PC-3 (cell line): ENCODE measurements at regions of chr11 and their contacts with region 1.

Region 1: DNA sequence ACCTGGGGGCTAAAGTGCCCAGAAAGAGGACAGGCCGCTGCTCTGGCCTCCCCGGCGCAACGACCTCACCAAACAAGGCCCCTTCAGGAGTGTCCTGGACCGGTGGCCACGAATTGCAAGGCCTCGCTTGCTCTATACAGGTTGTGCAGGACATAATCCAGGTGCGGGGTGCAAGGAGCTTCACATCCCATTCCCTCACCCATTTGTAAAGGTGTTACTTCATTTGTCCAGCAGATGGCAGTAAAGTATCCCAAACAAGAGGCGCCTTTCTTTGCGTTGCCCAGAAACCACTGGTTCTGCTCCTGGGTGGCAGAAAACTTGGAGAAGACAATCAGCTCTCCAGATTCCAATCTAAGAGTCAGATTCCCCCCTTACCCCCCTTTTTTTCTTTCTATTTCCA is 35.9 kb upstream of the PRDM11 start:
- DNase-seq: peak; percentile 82
- ATAC-seq: peak; percentile 72
- H3K4me3 ChIP-seq: no peak overlapping the region
- H3K27ac ChIP-seq: no peak overlapping the region
- H3K4me1 ChIP-seq: no peaks in the 10 kb centered on the region
- H3K27me3 ChIP-seq: peaks cover 5% of the 10 kb centered on the region; the same call in 1 of the 2 replicates
- CTCF ChIP-seq: peak; percentile 74

Region 2: GRCh38 chr11:44208976-44209603 is 901.5 kb before region 1 on chr11:
- CTCF ChIA-PET with region 1: interaction called, 22 read pairs
- POLR2A ChIA-PET with region 1: no interaction called
- intact Hi-C with region 1: no loop called
- DNase-seq: no peak
- ATAC-seq: no peak
- H3K4me3 ChIP-seq: no peak overlapping the region
- H3K27ac ChIP-seq: no peak overlapping the region
- H3K4me1 ChIP-seq: no peaks in the 10 kb centered on the region
- H3K27me3 ChIP-seq: no peaks in the 10 kb centered on the region
- CTCF ChIP-seq: no peak

Region 3: GRCh38 chr11:45252134-45252855 is 141.7 kb after region 1 on chr11:
- CTCF ChIA-PET with region 1: interaction called, 6 read pairs
- POLR2A ChIA-PET with region 1: no interaction called
- intact Hi-C with region 1: loop called (anchors 5 kb)
- DNase-seq: peak; percentile 60
- ATAC-seq: peak; percentile 97
- H3K4me3 ChIP-seq: no peak overlapping the region
- H3K27ac ChIP-seq: no peak overlapping the region
- H3K4me1 ChIP-seq: no peaks in the 10 kb centered on the region
- H3K27me3 ChIP-seq: no peaks in the 10 kb centered on the region
- CTCF ChIP-seq: peak; percentile 85

Region 4: DNA sequence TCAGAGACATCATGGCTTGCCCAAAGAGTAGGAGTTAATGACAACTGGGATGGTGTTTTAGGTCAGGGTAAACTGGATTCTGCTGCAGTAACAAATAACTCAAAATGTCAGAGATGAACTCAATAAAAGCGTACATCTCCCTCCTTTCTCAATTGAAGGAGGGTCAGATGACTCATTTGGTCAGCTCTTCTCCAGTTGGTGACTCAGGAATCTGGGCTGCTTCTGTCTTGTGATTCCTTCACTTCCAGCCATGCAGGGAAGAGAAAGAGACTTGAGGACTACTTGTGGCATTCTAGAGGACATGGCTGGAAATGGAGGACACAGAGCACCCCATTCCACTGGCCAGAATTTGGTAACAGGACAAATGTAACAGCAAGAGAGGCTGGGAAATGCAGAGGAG is 178.8 kb after region 1 on chr11:
- CTCF ChIA-PET with region 1: interaction called, 3 read pairs
- POLR2A ChIA-PET with region 1: no interaction called
- intact Hi-C with region 1: loop called (anchors 1 kb)
- DNase-seq: peak; percentile 60
- ATAC-seq: peak; percentile 45
- H3K4me3 ChIP-seq: no peak overlapping the region
- H3K27ac ChIP-seq: no peak overlapping the region
- H3K4me1 ChIP-seq: no peaks in the 10 kb centered on the region
- H3K27me3 ChIP-seq: peaks cover 33% of the 10 kb centered on the region
- CTCF ChIP-seq: no peak

Region 5: GRCh38 chr11:45332276-45332934 is 221.8 kb after region 1 on chr11:
- CTCF ChIA-PET with region 1: interaction called, 6 read pairs
- POLR2A ChIA-PET with region 1: interaction called, 6 read pairs
- intact Hi-C with region 1: loop called (anchors 1 kb)
- DNase-seq: peak; percentile 51
- ATAC-seq: peak; percentile 70
- H3K4me3 ChIP-seq: no peak overlapping the region
- H3K27ac ChIP-seq: no peak overlapping the region
- H3K4me1 ChIP-seq: peaks cover 13% of the 10 kb centered on the region
- H3K27me3 ChIP-seq: peaks cover 6% of the 10 kb centered on the region; the same call in 1 of the 2 replicates
- CTCF ChIP-seq: peak; percentile 60